Vagina (tissue), 2 donors: ENCODE measurements at regions of chr16 and their contacts with region 1.

Region 1: GRCh38 chr16:13143551-13143950 is 242.2 kb downstream of the SHISA9 start:
- DNase-seq: no peak
- H3K4me3 ChIP-seq: no peak overlapping the region
- H3K27ac ChIP-seq: no peak overlapping the region
- H3K4me1 ChIP-seq: no peaks in the 10 kb centered on the region
- H3K27me3 ChIP-seq: no peaks in the 10 kb centered on the region
- CTCF ChIP-seq: no peak
- POLR2A ChIP-seq: no peak

Region 2: DNA sequence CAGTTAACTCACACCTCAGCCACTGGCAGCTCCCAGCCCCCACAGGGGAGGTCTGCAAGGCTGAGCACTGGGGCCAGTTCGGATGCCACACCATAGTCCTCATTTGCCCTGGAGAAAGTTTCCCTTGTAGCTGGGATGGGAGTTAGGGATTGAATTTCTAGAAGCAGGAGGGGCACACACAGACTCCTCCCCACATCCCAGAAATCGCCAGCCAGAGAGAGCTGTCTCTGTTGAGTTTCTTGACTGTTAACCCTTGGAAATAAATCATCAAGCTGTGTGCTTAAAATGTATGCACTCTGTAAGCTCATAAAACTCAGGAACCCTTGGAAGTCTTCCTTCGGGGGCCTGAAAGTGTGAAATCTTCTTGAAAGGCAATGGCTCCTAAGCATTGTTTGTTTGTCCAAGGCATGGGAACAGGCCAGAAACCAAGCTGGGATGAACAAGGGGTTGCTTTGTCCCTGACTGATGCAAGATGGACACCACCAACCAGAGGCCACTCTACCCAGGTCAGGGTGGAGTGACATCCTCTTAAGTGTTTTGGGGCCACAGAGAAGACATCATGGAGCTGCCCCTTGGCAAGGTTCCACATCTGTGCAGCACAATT is 1869.7 kb before region 1 on chr16:
- intact Hi-C with region 1: no loop called
- DNase-seq: no peak
- H3K4me3 ChIP-seq: no peak overlapping the region
- H3K27ac ChIP-seq: no peak overlapping the region
- H3K4me1 ChIP-seq: no peaks in the 10 kb centered on the region
- H3K27me3 ChIP-seq: no peaks in the 10 kb centered on the region
- CTCF ChIP-seq: no peak
- POLR2A ChIP-seq: no peak

Region 3: GRCh38 chr16:12771341-12771798 is 372.2 kb before region 1 on chr16:
- intact Hi-C with region 1: loop called (anchors 5 kb)
- DNase-seq: no peak
- H3K4me3 ChIP-seq: no peak overlapping the region
- H3K27ac ChIP-seq: no peak overlapping the region
- H3K4me1 ChIP-seq: no peaks in the 10 kb centered on the region
- H3K27me3 ChIP-seq: no peaks in the 10 kb centered on the region
- CTCF ChIP-seq: no peak
- POLR2A ChIP-seq: no peak

Region 4: DNA sequence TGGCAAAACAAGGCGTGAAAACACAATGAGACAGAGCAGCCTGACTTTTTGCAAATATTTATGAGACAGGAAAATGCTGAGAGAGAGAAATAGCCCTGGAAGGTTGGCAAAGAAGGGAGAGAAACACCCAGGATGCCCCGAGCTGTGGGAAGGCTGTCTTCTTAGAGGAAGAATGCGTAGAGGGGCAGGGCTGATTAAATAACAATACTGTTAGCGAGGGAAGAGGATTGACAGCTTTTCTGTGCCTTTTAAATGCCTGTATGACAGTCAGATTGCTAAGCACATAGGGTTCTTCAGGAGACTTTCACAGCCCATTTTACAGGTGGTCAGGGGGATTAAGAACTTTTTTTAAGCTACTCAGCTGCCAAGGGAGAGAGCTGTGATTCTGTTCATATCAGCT is 23.0 kb before region 1 on chr16:
- intact Hi-C with region 1: no loop called
- DNase-seq: no peak
- H3K4me3 ChIP-seq: no peak overlapping the region
- H3K27ac ChIP-seq: no peak overlapping the region
- H3K4me1 ChIP-seq: no peaks in the 10 kb centered on the region
- H3K27me3 ChIP-seq: no peaks in the 10 kb centered on the region
- CTCF ChIP-seq: no peak
- POLR2A ChIP-seq: no peak